GM18951 (cell line): ENCODE measurements at regions of chr13 and their contacts with region 1.

Region 1: DNA sequence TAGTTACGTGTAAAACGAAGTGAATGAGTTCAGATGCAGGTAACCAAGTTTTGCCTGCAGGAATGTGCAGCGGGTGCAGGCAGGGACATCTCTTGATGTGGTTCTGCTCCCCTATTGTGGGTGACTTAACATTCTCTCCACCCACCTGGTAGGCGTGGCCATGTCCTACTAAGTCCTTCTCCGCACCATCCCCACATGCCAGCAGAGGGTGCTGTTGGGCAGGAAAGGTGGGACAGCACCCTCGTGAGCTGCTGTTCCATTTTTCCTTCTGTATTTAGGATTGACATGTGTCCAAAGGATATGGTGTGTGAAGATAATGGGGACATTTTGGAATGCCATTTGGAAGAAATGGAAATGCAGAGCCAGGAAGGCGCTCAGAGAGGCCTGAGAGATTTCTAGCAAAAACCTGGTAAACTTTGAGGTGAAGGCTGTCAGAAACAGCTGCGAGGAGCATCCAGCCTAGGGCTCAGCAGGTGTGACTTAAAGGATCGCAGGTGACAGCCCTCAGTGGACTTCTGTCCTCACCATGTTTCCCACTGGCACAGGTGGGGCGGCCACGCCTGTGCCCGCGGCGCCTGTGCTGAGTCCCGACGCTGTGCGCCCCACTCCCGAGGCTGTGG is 26.2 kb upstream of the MCF2L start:
- POLR2A ChIP-seq: no peak

Region 2: GRCh38 chr13:113562085-113562749 is 619.4 kb after region 1 on chr13:
- in situ Hi-C with region 1: loop called (anchors 25 kb)
- POLR2A ChIP-seq: no peak